ENCODE measurements at regions of chr3 and their contacts with region 1.

Region 1: DNA sequence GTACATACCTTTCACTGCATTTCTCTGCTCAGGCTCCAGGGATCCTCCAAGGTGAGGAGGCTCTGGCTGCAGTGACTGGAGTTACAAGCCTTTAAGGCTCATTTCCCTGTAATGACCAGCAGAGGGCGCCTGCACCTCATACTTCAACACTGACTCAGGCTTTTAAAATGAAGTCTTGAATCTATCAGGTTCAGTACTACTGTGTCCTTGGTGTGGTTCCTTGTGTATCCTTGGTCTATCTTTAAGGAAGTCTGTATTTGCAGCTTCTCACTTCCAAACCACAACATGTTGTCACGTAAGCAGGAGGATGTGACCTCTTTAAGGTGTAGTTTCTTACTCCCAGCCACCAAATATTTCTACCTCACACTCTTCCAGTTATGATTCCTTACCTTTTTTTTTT is 122.5 kb upstream of the ZBED2 start:
- ATAC-seq: peak; percentile 93 to 99 (median 97)
- H3K4me3 ChIP-seq: no peak overlapping the region
- H3K27ac ChIP-seq: no peak overlapping the region
- H3K4me1 ChIP-seq: peaks cover 0 to 3% of the 10 kb centered on the region in 2 donors

Region 2: DNA sequence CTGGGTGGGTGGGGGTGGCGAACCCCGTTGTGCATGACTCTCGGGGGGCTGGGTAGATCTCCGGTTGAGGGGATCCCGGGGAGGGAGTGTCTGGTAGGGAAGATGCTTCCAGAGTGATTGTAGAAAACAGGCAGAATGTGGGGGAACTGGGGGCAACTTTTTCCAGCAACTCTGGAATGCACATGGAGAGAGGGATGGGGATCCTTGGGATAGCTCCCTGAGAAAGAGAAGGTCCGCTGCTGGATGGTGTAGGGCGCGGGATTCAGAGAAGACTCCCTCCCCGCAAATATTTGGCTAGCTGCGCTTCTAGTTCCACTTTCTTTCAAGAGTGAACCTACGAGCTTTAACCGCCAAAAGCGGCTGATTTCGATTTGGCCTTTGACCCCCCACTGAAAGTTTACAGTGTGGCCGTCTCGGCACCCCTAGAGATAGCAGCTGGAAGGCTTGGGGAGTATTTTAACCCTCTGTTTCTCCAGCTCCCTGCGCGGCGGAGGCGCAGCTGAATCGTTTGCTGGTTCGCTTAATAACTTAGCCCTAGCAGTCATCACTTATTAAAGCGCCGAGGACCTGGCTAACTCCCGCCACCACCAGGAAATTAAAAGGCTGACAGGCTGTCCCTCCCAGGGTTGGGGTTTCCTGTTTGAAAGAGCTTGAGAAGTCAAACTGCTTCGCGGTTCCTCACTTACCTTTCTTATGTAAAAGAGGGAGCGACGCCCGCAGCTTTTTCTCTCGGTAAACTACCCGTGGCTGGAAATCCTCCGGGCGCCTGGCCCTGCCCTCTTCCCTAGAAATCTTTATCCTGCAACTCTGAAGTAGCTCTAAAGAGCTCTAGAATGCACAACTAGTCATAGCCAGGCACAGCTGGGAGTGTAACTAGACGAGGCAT is 142.6 kb after region 1 on chr3:
- in situ Hi-C with region 1: loop called in 3 of 9 experiments (anchors 10 to 25 kb)
- ATAC-seq: peak; percentile 54 to 84 (median 63)
- H3K4me3 ChIP-seq: peak overlapping the region; percentile 55 to 90 (median 77)
- H3K27ac ChIP-seq: peak overlapping the region in 1 of 2 donors; percentile 31
- H3K4me1 ChIP-seq: peaks cover 0 to 16% of the 10 kb centered on the region in 2 donors

Region 3: DNA sequence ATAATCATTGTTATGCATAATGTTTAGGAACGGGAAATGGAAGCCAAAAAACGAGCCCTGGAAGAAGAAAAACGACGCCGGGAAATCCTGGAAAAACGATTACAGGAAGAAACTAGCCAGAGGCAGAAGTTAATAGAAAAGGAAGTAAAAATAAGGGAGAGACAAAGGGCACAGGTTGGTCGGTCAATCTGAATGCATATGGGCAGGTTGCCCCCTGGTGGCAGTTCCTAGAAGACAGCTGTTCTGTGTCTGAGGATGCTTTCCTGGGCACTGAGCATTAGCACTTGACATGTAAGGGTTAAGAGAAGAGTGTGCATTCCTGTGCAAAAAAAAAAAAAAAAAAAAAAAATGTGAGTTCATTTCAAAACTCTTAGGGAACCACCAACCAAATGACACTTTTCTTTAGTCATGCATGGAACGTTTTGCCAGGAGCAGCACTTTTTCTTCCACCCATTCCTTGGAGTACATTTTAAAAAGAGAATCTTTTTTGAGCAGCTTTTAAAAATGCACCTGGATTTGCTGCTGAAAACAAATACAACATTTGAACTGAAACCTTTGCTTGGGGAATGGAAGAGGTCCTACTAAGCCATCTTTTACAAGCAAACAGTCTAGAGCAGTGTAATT is 250.2 kb after region 1 on chr3:
- in situ Hi-C with region 1: loop called in 7 of 9 experiments (anchors 10 to 25 kb)
- ATAC-seq: peak; percentile 46 to 97 (median 74)
- H3K4me3 ChIP-seq: no peak overlapping the region
- H3K27ac ChIP-seq: no peak overlapping the region
- H3K4me1 ChIP-seq: peaks cover 8 to 31% of the 10 kb centered on the region in 2 donors

Region 4: GRCh38 chr3:111978493-111979433 is 261.2 kb after region 1 on chr3 and contains the start of gene ABHD10:
- in situ Hi-C with region 1: loop called in 7 of 9 experiments (anchors 10 to 25 kb)
- ATAC-seq: peak; percentile 93 to 99 (median 98)
- H3K4me3 ChIP-seq: peak within 1 kb of the TSS; percentile 63 to 89 (median 85)
- H3K27ac ChIP-seq: peak within 1 kb of the TSS; percentile 85 to 93
- H3K4me1 ChIP-seq: peaks cover 8 to 28% of the 10 kb centered on the region in 2 donors
- total RNA-seq, gene ABHD10: 29.6 to 56.2 (median 39.8) TPM

Region 5: GRCh38 chr3:112074721-112075497 is 357.3 kb after region 1 on chr3:
- in situ Hi-C with region 1: loop called in 2 of 9 experiments (anchors 25 kb)
- ATAC-seq: peak; percentile 56 to 100 (median 78)
- H3K4me3 ChIP-seq: no peak overlapping the region
- H3K27ac ChIP-seq: no peak overlapping the region
- H3K4me1 ChIP-seq: peaks cover 0 to 10% of the 10 kb centered on the region in 2 donors